Activated T-helper 2 cell treated with anti-CD3 and anti-CD28 coated beads, Interferon-gamma antibody, Interleukin-2, Interleukin-4, amounts not matched to agents 10 μg/mL and 5 μg/mL and 100 μg/mL, durations not matched to agents 14 hours and 24 hours and 36 hours (primary cell): ENCODE measurements at regions of chr18 and their contacts with region 1.

Region 1: DNA sequence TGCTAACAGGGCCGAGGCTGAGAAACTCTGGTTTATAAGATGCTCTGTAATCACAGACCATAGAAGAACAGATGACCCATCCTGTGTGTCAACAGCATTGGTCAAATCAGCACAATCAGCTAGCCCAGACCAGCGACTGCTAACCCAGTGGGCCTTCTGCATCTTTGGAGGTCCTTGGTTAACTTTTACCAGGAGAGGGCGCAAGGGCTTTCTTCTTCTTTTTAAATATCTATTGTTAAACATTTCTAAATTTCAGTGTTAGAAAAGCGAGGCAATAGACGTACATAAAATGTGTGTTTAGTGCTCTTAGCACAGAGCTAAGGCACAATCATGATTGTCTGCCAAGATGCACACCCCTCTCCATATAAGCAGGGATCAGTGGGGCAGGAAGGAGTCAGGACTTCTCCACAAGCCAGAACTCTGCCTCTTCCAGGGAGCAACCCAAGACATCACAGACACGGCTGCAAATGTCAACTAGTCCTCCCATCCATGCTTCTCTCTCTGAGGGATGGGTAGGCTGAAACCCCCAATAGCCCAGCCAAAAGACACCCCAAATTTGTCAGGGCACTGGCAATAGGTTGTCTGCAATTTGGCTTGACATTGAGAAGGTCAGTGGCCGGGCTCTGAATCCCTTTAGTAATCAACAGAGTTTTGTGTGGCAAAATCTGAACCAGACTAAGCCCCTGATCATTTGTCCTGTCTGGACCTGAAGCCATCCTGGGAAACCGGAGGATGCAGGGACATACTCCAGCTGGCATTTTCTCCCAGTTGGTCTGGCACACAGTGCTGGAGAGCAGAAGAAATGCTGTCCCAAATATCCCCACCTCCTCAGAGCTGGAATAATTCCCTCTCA is 188.2 kb downstream of the BCL2 start:
- DNase-seq: no peak
- H3K4me3 Mint-ChIP-seq: no peak overlapping the region
- H3K27ac Mint-ChIP-seq: no peak overlapping the region
- H3K4me1 Mint-ChIP-seq: peaks cover 37% of the 10 kb centered on the region
- H3K27me3 Mint-ChIP-seq: no peaks in the 10 kb centered on the region

Region 2: GRCh38 chr18:63141778-63142176 is 10.4 kb after region 1 on chr18:
- intact Hi-C with region 1: no loop called
- DNase-seq: no peak
- H3K4me3 Mint-ChIP-seq: no peak overlapping the region
- H3K27ac Mint-ChIP-seq: no peak overlapping the region
- H3K4me1 Mint-ChIP-seq: peaks cover 41% of the 10 kb centered on the region
- H3K27me3 Mint-ChIP-seq: no peaks in the 10 kb centered on the region

Region 3: DNA sequence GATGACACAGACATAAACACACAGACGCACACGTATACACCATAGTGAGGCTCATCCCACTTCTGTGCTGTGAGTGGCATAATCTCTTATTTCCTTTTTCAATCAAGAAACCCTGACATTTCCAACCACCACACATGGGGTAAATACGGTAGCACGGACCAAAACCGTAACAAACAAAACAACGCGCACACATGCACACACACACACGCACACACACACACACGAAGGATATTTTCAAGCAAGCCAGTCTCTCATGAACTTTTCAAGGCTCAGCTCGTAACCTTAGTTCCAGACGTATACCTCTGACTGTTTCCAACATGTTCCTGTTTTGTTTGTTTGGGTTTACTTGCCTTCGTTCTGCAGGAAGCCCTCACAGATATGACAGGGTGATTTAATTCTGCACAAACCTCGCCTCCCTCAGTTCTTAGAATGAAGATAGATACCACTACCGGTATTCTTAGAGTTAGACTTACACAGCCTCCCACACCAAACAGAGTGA is 68.5 kb after region 1 on chr18:
- intact Hi-C with region 1: loop called (anchors 1 kb)
- DNase-seq: peak; percentile 56
- H3K4me3 Mint-ChIP-seq: no peak overlapping the region
- H3K27ac Mint-ChIP-seq: no peak overlapping the region
- H3K4me1 Mint-ChIP-seq: peaks cover 30% of the 10 kb centered on the region
- H3K27me3 Mint-ChIP-seq: no peaks in the 10 kb centered on the region